ENCODE measurements at regions of chr6 and their contacts with region 1.

Region 1: DNA sequence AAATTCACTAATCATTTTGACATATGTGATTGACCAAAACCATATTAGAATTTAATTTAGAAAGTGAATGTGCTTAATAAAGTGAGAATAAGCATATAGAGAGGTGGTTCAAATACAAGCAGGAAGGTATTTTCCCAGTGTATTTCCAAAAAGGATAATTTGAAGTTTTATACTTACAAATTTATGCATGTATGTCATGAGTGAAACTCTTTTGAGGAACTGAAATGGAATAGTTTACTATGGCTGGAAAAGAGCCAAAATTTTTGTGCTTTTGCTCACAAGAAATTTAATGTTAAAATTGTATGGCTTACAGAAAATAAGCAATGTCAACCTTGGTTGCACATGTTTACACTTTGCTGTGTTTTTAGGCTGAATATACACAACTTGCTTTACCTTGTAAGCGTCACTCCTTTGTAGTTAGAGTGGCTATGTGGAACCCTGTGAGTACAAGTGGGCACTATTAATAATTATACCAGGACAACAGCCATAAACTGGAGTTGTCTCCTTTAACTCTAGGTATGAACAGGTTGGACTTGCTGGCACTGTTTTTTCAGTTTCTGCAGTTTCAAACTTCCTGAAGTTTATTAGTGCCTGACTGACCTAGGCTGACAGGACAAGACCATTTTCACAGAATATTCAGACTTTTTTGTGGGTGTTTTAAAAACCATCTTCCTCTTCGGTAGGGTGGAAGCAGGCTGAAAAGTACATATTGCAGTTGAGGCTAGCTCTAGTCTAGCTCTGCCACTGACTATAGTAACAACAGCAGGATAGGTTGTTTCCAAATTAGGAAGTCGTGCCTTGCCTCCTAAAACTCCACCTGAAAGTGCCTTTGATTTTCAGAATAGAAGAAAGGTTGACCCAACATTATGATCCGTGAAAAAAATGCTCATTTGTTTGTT is 6.0 kb downstream of the AFDN start:
- DNase-seq: no peak
- H3K4me3 Mint-ChIP-seq: peak overlapping the region; percentile 45
- H3K27ac Mint-ChIP-seq: peak overlapping the region; percentile 46
- H3K4me1 Mint-ChIP-seq: peaks cover 59% of the 10 kb centered on the region
- H3K27me3 Mint-ChIP-seq: peaks cover 29% of the 10 kb centered on the region

Region 2: DNA sequence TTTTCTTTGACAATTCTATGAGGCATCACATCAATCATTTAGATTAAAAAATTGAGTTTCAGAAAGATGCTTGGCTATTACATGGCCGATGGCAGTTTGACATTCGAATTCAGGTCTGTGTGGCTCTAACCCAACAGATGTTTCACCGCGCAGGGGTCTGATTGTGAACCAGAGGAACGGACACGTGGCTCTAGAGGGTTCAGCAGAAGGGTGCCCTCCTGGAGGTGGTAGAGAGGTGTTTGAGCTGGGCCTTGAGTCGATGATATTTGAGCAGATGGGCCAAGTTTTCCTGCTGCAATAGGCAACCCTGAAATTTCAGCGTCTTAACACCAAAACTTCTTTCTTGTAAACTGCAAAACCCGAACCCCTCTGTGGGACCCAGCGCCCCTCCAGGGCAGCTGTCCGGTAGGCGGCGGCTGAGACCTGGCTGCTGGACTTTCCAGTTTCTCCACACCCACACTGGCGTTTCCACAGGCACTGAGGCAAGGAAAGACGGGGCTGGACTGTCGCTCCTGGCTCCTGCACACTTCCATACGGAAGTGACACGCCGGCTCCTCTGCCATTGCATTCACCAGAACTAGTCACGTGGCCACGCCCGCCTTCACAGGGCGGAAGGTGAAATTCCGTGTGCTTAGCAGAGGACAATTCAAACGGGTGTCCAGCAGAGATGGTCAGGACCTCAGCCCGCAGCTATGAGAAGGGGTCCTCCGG is 17.3 kb before region 1 on chr6:
- intact Hi-C with region 1: no loop called
- DNase-seq: no peak
- H3K4me3 Mint-ChIP-seq: peak overlapping the region; percentile 45
- H3K27ac Mint-ChIP-seq: no peak overlapping the region
- H3K4me1 Mint-ChIP-seq: no peaks in the 10 kb centered on the region
- H3K27me3 Mint-ChIP-seq: peaks cover 39% of the 10 kb centered on the region

Region 3: DNA sequence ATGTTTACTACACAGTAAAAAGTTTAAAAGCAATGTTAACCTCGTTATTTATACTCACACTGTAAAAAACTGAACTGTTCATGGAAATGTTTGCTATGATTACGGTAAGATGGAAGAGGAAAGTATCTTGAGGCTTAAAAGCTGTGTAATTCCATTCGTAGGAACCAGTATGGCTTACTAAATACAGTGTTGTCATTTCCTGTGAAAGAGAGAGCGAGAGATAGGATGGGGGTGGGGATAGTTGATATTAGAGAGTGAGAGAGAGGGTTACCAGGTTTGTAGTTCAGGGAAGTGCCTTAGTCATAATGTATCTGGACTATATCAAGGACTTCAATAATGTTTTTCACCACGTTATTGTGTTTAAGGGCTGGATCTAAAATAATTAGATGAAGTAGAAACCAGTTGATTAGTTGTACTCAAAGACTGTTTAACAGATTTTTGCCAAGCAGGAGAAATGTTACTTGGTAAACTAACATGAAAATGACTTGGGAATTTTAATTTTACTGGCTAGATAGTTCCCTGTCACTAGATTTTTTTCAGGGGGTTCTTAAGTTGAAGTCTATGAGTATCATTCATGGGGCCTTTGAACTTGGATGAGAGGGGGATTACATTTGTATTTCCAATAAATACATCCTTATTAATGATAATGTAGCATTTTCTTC is 24.4 kb after region 1 on chr6:
- intact Hi-C with region 1: loop called (anchors 1 kb)
- DNase-seq: no peak
- H3K4me3 Mint-ChIP-seq: no peak overlapping the region
- H3K27ac Mint-ChIP-seq: no peak overlapping the region
- H3K4me1 Mint-ChIP-seq: peaks cover 38% of the 10 kb centered on the region
- H3K27me3 Mint-ChIP-seq: peaks cover 18% of the 10 kb centered on the region

Region 4: DNA sequence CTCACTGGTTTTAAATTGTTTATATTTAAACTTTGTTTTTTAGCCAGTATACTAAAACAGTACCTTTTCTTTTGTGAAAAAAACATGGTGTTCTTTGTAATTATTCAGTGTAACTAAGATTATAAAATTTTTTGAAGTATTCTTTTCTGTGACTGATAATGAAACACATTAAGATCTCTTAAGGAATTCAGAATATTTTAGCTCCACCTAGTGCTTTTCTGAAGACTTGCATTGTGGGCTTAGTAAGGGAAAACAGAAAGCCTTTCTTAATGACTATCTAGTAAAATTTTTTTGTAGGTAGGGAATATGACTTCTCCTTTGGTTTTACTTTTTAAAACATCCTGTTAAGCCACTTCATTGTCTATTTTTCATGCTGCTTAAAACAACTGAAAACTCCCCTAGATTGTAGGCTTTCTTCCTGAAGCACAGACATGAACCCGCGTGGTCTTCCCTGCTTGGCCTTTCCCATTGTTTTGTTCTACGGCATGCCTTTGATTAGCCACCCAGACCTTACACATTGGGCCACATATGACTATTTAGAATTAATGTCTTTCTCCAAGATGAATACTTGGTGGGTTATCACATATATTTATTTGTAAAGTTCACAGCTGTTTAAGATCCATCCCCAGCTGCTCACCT is 66.0 kb after region 1 on chr6:
- intact Hi-C with region 1: loop called (anchors 2 kb)
- DNase-seq: no peak
- H3K4me3 Mint-ChIP-seq: no peak overlapping the region
- H3K27ac Mint-ChIP-seq: no peak overlapping the region
- H3K4me1 Mint-ChIP-seq: no peaks in the 10 kb centered on the region
- H3K27me3 Mint-ChIP-seq: no peaks in the 10 kb centered on the region

Region 5: DNA sequence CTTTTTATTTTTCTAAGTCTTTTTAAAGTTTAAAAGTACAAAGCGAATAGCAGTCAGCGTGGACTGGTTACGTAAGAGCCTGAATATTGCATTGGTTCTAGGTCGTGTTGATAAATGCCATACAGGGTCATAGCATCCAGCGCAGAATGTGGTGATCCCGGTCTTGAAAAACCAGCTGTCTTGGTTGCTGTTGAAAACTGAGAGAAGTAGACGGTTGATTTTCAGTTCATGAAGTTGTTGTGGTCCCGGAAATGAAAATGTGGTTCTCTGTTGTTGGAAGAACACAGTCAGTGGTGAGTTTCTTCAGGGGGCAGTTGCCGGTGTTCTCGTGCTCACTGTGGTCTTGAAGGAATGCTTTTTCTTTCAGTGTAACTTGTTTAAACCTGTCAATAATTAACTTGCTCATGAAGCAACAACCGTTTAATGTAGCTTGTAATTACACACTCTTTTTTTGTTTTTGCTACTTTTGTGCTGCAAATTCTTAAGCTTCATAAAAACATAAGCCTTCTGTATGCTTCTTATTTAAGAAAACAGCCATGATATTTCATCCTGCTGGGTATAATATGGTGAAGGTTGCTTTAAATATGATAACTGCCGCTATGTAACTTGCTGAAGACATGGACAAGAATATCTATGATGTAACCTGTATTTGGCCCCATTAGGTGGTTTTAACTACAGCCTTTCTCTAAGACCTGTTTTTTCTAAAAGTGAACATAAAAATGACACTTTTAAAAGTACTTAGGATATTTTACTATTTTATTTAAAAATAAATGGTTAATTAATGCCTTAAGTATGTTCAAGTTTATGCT is 99.9 kb after region 1 on chr6:
- intact Hi-C with region 1: no loop called
- DNase-seq: no peak
- H3K4me3 Mint-ChIP-seq: no peak overlapping the region
- H3K27ac Mint-ChIP-seq: no peak overlapping the region
- H3K4me1 Mint-ChIP-seq: no peaks in the 10 kb centered on the region
- H3K27me3 Mint-ChIP-seq: no peaks in the 10 kb centered on the region

Region 6: DNA sequence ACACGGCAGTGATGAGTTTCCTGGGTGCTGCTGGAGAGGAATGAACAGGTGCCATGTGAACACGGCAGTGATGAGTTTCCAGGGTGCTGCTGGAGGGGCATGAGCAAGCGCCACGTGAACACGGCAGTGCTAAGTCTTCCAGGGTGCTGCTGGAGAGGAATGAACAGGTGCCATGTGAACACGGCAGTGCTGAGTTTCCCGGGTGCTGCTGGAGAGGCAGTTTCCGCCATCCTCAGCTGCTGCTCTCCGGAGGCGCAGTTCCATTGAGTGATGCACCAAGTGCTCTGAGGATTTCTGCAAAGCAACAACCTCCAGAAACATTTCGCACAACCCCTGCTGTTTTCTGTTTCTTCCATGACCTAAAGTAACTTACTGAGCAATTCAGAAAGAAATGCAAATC is 763.6 kb after region 1 on chr6:
- intact Hi-C with region 1: no loop called
- DNase-seq: no peak
- H3K4me3 Mint-ChIP-seq: no peak overlapping the region
- H3K27ac Mint-ChIP-seq: no peak overlapping the region
- H3K4me1 Mint-ChIP-seq: no peaks in the 10 kb centered on the region
- H3K27me3 Mint-ChIP-seq: no peaks in the 10 kb centered on the region

Region 7: GRCh38 chr6:169738204-169738975 is 1905.6 kb after region 1 on chr6:
- intact Hi-C with region 1: no loop called
- DNase-seq: no peak
- H3K4me3 Mint-ChIP-seq: no peak overlapping the region
- H3K27ac Mint-ChIP-seq: no peak overlapping the region
- H3K4me1 Mint-ChIP-seq: no peaks in the 10 kb centered on the region
- H3K27me3 Mint-ChIP-seq: peaks cover 38% of the 10 kb centered on the region